WTC11 (cell line): ENCODE measurements at regions of chr15 and their contacts with region 1.

Region 1: DNA sequence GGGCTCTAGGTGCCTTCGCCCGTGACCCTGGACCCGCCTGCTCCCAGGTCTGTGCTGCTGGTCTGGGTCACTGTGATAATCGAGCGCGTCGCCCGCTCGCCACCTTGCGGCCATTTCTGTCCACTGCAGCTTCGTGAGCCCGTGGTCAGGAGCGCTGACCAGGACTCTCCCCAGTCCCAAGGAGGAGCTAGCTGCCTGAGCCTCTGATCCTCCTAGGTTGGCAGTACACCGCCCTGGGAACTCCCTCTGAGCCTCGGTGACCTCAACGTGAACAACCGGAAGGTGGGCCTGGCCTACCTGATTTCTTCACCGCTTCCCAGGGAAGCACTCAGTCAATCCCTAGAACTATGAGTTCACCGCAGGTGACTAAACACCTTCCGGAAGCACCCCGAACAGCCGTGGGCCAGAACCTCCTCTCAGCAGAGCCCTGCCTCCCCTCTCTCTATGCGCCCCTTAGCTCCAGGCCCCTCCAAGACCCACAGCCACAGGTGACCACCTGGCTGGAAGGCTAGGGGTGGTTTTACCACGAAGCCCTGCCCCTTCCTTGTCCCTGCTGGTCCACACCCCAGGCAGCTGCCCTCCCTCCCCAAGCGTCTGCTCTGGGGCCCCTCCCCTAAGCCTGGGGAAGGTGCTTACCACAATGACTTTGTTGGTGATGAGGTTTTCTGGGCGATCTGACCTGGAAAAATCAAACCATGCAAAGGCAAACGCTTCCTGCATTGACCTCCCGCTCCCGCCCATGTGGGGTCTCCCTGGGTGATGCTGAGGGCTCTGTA is 9.7 kb downstream of the PLA2G4D start:
- DNase-seq: peak; percentile 85
- ATAC-seq: peak; percentile 85
- H3K4me3 Mint-ChIP-seq: no peak overlapping the region
- H3K27ac Mint-ChIP-seq: no peak overlapping the region
- H3K4me1 Mint-ChIP-seq: peaks cover 26% of the 10 kb centered on the region
- H3K27me3 Mint-ChIP-seq: no peaks in the 10 kb centered on the region; the same call in 1 of the 2 replicates
- CTCF ChIP-seq: peak; percentile 94

Region 2: DNA sequence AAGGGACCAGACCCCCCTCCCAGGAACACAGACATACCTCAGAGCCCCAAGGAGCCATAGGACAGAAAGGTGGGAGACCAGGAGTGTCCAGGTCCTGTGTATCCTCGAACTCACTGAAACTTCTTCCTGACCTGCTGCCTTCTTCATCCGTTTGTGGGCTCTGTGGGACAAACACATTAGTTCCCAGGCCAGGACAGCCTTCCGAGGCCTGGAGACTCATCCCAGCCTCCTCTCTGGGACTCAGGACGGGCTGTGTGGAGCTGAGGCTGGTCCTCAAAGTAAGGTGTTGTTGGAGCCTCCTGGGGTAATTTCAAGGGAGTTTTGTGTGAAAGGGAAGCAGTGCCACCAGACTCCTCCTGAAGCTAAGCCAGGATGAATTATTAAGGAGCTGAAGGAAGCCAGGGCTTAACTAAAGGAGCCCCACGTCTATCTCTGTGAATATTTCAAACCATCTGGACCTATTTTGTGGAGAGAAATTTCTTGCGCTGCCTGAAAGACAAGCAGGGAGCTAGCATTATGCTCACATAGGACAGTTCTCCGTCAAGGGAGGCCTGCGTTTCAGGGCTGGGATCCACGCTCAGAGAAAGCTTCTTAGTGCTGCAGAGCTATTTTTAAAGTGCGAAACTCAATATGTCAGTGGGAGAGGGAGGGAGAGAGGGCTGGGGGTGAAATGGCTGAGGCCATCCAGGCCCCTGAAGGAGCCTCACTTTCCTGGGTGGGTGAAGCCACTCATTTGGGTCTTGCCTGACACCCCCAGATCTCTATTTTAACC is 34.0 kb before region 1 on chr15:
- CTCF ChIA-PET with region 1: interaction called, 23 read pairs
- POLR2A ChIA-PET with region 1: no interaction called
- DNase-seq: no peak
- ATAC-seq: no peak
- H3K4me3 Mint-ChIP-seq: no peak overlapping the region
- H3K27ac Mint-ChIP-seq: no peak overlapping the region
- H3K4me1 Mint-ChIP-seq: peaks cover 16% of the 10 kb centered on the region
- H3K27me3 Mint-ChIP-seq: no peaks in the 10 kb centered on the region
- CTCF ChIP-seq: no peak

Region 3: DNA sequence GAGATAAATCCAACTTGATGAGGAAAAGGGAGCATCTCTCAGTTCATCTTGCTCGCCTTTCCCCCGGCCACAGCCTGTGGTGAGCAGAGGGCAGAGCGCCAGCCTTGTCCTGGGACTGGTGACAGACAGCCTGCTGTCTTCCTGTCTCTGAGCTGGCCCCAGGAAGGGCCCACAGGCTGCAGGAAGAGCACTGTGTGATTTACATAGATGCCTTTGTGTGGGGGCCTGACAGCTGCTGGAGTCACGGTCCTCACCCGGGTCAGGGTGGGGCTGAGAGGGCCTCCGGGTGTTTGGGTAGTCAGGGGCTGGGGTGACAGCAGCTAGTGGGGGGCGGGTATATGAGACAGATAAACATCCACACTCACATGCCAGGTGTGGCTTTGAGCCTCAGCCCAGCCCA is 19.6 kb before region 1 on chr15:
- CTCF ChIA-PET with region 1: interaction called, 164 read pairs
- POLR2A ChIA-PET with region 1: no interaction called
- DNase-seq: no peak
- ATAC-seq: 0 out of 2 replicates have a peak, but pooled peaks have one; percentile 15
- H3K4me3 Mint-ChIP-seq: no peak overlapping the region
- H3K27ac Mint-ChIP-seq: no peak overlapping the region
- H3K4me1 Mint-ChIP-seq: peaks cover 5% of the 10 kb centered on the region
- H3K27me3 Mint-ChIP-seq: no peaks in the 10 kb centered on the region; the same call in 1 of the 2 replicates
- CTCF ChIP-seq: no peak

Region 4: GRCh38 chr15:42107473-42107872 is 22.8 kb after region 1 on chr15:
- CTCF ChIA-PET with region 1: interaction called, 13 read pairs
- POLR2A ChIA-PET with region 1: no interaction called
- DNase-seq: no peak
- ATAC-seq: no peak
- H3K4me3 Mint-ChIP-seq: no peak overlapping the region
- H3K27ac Mint-ChIP-seq: no peak overlapping the region
- H3K4me1 Mint-ChIP-seq: 0 out of 2 replicates have a peak, but pooled peaks cover 3% of the 10 kb centered on the region
- H3K27me3 Mint-ChIP-seq: no peaks in the 10 kb centered on the region
- CTCF ChIP-seq: no peak

Region 5: DNA sequence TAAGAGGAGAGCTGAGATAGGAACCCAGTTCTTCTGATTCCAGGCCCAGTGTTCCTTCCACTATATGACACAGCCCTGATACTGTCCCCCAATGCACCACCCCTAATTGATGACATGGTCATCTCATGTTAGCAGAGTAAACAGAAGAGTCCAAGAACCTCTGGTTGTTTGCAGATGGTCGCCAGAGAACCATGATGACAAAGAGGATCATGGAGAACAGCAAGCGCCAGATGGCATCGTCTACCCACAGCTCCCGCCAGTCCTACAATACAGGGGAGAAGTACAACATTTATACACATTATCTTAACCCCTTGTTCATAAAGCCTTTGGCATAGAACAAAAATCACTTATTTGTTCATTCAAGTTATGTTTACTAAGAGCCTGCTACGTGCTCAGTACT is 142.0 kb after region 1 on chr15:
- CTCF ChIA-PET with region 1: no interaction called
- POLR2A ChIA-PET with region 1: no interaction called
- DNase-seq: no peak
- ATAC-seq: no peak
- H3K4me3 Mint-ChIP-seq: no peak overlapping the region
- H3K27ac Mint-ChIP-seq: no peak overlapping the region
- H3K4me1 Mint-ChIP-seq: no peaks in the 10 kb centered on the region
- H3K27me3 Mint-ChIP-seq: no peaks in the 10 kb centered on the region
- CTCF ChIP-seq: no peak

Region 6: GRCh38 chr15:42253300-42253699 is 168.7 kb after region 1 on chr15:
- CTCF ChIA-PET with region 1: no interaction called
- POLR2A ChIA-PET with region 1: no interaction called
- DNase-seq: no peak
- ATAC-seq: no peak
- H3K4me3 Mint-ChIP-seq: no peak overlapping the region
- H3K27ac Mint-ChIP-seq: no peak overlapping the region
- H3K4me1 Mint-ChIP-seq: no peaks in the 10 kb centered on the region
- H3K27me3 Mint-ChIP-seq: no peaks in the 10 kb centered on the region; the same call in 1 of the 2 replicates
- CTCF ChIP-seq: no peak

Region 7: DNA sequence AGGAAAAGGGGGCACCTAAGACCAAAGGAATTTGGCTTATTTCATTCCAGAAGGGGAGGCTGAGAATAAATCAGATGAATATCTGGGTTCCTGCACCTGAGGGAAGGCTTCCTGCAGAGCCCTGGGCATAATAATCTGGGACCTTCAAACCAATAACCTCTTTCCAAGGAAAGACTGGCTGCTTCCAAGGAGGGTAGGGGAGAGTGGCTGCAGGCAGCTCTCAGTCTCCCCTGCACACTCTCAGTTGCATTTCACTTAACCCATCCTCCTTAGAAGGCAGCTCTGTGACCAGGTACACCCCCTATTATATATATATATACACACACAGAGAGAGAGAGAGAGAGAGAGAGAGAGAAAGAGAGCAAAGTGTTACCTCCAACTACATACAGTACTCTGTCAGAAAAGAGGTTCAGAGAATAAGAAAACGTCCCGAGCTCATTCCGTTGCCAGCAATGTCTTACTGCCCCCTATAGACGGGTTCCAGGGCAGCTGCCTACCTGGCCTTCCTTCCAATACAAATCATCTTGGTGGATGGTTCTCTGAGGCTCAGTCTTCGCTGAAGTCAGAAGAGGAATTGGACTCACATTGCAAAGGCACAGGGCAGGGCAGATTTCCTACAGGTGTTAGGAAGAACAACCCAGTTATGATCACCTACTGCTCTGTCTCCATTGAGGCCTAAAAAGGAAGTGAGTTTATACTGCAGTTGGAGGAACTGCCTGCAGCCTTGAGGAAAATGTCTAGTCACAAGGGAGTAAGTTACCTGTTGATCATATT is 300.7 kb after region 1 on chr15:
- CTCF ChIA-PET with region 1: interaction called, 24 read pairs
- POLR2A ChIA-PET with region 1: no interaction called
- DNase-seq: peak; percentile 77
- ATAC-seq: peak; percentile 85
- H3K4me3 Mint-ChIP-seq: no peak overlapping the region
- H3K27ac Mint-ChIP-seq: no peak overlapping the region; the same call in 1 of the 2 replicates
- H3K4me1 Mint-ChIP-seq: peaks cover 29% of the 10 kb centered on the region
- H3K27me3 Mint-ChIP-seq: peaks cover 18% of the 10 kb centered on the region
- CTCF ChIP-seq: peak; percentile 51; the same call in 1 of the 2 replicates